MCF 10A (cell line): ENCODE measurements at regions of chr7 and their contacts with region 1.

Region 1: GRCh38 chr7:134432296-134433152 is 26.4 kb downstream of the AKR1B1 start:
- DNase-seq: peak; percentile 91
- H3K4me3 Mint-ChIP-seq: peak overlapping the region; percentile 67
- H3K27ac Mint-ChIP-seq: no peak overlapping the region
- H3K4me1 Mint-ChIP-seq: peaks cover 17% of the 10 kb centered on the region
- H3K27me3 Mint-ChIP-seq: no peaks in the 10 kb centered on the region
- CTCF ChIP-seq: peak; percentile 66

Region 2: GRCh38 chr7:134403677-134404076 is 28.8 kb before region 1 on chr7:
- CTCF ChIA-PET with region 1: no interaction called
- POLR2A ChIA-PET with region 1: no interaction called
- intact Hi-C with region 1: no loop called
- DNase-seq: no peak
- H3K4me3 Mint-ChIP-seq: no peak overlapping the region
- H3K27ac Mint-ChIP-seq: no peak overlapping the region
- H3K4me1 Mint-ChIP-seq: no peaks in the 10 kb centered on the region
- H3K27me3 Mint-ChIP-seq: no peaks in the 10 kb centered on the region
- CTCF ChIP-seq: no peak

Region 3: DNA sequence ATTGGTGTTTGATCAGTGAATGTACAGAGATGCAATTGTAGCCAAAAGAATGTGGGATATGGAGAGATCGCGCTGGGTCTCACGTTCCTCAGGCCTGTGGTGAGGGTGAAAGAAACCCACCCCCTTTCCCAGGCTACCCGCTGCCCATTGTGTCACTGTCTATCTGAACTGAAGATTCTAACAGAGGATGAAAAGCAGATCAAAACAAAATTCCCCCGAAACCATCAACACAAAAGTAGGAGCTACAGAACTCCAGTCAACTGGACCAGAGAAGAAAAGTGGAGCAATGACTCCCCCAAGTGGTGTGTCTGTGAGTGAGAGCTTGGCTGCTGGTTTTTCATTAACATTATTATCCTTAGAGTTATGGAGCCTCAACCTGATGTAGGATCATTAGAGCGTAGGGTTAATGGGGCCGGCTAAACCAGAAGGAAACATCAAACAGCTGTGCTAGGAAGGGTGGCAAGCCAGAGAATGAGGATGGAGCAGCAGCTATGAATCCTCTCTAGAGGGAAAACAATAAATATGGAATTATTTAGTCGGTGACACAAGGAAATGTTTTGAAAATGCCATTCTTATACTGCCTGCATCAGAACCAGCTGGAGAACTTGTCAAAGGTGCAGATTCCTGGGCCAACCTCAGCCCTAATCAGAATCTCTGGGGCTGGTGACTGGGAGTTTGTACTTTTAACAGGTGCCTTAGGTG is 11.9 kb before region 1 on chr7:
- CTCF ChIA-PET with region 1: interaction called, 22 read pairs
- POLR2A ChIA-PET with region 1: interaction called, 3 read pairs
- intact Hi-C with region 1: no loop called
- DNase-seq: peak; percentile 88
- H3K4me3 Mint-ChIP-seq: peak overlapping the region; percentile 26
- H3K27ac Mint-ChIP-seq: no peak overlapping the region
- H3K4me1 Mint-ChIP-seq: peaks cover 16% of the 10 kb centered on the region
- H3K27me3 Mint-ChIP-seq: no peaks in the 10 kb centered on the region
- CTCF ChIP-seq: peak; percentile 73

Region 4: GRCh38 chr7:134458806-134459698 is 26.5 kb after region 1 on chr7 and contains the start of gene AKR1B1:
- CTCF ChIA-PET with region 1: interaction called, 34 read pairs
- POLR2A ChIA-PET with region 1: interaction called, 7 read pairs
- intact Hi-C with region 1: no loop called
- DNase-seq: peak; percentile 86
- H3K4me3 Mint-ChIP-seq: peak within 1 kb of the TSS; percentile 76
- H3K27ac Mint-ChIP-seq: peak within 1 kb of the TSS; percentile 61
- H3K4me1 Mint-ChIP-seq: peaks cover 29% of the 10 kb centered on the region
- H3K27me3 Mint-ChIP-seq: no peaks in the 10 kb centered on the region
- CTCF ChIP-seq: peak; percentile 18
- total RNA-seq, gene AKR1B1: 115 and 128 TPM in 2 replicates

Region 5: GRCh38 chr7:134504660-134505164 is 72.2 kb after region 1 on chr7:
- CTCF ChIA-PET with region 1: interaction called, 256 read pairs
- POLR2A ChIA-PET with region 1: interaction called, 3 read pairs
- intact Hi-C with region 1: no loop called
- DNase-seq: peak; percentile 43
- H3K4me3 Mint-ChIP-seq: no peak overlapping the region
- H3K27ac Mint-ChIP-seq: peak overlapping the region; percentile 59
- H3K4me1 Mint-ChIP-seq: peaks cover 20% of the 10 kb centered on the region
- H3K27me3 Mint-ChIP-seq: no peaks in the 10 kb centered on the region
- CTCF ChIP-seq: no peak

Region 6: DNA sequence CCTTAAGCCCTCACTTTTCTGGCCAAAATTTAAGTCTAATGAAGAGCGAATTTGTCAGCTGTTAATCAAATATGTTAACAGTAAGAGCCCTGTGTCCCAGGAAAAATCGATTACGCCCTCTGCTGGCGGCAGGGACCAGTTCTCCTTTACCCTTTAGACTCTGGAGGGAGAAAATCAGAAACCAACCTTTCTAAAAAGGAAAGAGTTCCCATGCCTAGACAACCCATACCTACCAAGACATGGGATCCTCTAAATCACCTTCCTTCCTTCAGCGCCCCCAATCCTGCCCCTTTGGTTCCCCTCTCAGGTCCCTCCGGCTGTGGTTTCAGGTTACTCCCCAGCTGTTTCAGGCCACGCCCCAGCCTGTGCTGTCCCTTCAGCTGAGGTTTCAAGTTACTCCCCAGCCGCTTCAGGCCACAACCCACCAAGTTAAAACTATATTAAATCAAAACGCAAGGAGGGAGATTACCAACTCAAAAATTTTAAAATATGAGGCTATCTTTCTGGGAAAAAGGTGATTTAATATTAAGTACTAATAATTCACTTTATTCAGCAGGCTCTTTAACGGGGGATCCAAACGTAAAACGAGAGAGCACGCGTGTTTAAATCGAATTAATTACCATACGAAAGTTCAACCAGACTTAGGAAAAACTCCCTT is 115.0 kb after region 1 on chr7:
- CTCF ChIA-PET with region 1: interaction called, 26 read pairs
- POLR2A ChIA-PET with region 1: interaction called, 3 read pairs
- intact Hi-C with region 1: loop called (anchors 1 kb)
- DNase-seq: peak; percentile 83
- H3K4me3 Mint-ChIP-seq: peak overlapping the region; percentile 68
- H3K27ac Mint-ChIP-seq: peak overlapping the region; percentile 68
- H3K4me1 Mint-ChIP-seq: peaks cover 26% of the 10 kb centered on the region
- H3K27me3 Mint-ChIP-seq: no peaks in the 10 kb centered on the region
- CTCF ChIP-seq: peak; percentile 74

Region 7: DNA sequence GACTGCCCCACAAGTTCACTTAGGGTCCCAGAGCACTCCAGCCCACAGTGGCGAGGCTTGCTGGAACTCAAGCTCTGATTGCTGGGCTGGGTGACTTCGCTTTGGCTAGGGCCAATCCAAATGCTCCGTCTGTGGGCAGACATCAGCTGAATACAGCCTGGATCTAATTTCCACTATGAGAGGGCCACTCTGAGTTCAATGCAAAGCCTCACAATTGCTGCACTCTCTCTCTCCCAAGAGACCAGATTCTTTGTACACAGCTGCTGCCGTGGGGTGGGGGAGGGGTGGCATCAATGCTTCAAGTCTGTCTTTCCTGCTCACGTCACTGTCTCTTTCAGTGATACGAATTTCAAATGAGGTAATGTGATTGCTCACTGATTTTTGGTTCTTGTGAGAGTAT is 166.8 kb after region 1 on chr7:
- CTCF ChIA-PET with region 1: interaction called, 13 read pairs
- POLR2A ChIA-PET with region 1: interaction called, 3 read pairs
- intact Hi-C with region 1: no loop called
- DNase-seq: no peak
- H3K4me3 Mint-ChIP-seq: no peak overlapping the region
- H3K27ac Mint-ChIP-seq: no peak overlapping the region
- H3K4me1 Mint-ChIP-seq: no peaks in the 10 kb centered on the region
- H3K27me3 Mint-ChIP-seq: no peaks in the 10 kb centered on the region
- CTCF ChIP-seq: no peak

Region 8: DNA sequence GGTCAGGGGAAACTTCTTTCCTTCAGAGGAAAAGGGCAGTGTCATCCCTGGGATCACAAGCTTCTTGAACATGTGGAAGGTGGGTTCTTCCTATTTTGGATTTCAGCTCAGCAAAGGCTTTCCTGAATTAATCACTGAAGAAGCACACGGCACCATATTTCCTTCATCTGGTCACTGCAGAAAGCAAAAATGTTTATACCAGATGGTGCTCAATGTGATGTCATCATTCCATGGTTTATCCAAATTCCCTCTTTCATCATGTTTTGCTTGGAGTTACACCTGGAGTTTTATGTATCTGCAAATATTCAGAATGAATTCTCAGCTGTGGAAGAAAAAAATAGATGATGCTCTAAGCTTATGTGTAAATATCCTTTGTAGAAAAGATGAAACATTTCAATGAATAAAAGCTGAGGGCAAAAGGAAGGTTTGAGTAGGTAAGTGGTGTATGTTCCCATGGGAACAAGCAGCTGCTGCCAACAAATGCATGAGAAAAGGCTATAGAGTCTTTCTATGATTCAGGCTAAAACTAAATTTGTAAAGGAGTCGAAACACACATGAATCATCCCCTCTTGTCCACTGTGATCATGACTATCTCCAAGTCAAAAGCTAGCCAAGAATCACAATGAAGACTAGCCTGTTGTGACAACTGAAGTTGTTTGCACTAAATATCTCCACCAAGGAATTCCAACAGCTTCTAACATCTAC is 187.3 kb after region 1 on chr7:
- CTCF ChIA-PET with region 1: interaction called, 17 read pairs
- POLR2A ChIA-PET with region 1: no interaction called
- intact Hi-C with region 1: no loop called
- DNase-seq: peak; percentile 92
- H3K4me3 Mint-ChIP-seq: no peak overlapping the region
- H3K27ac Mint-ChIP-seq: peak overlapping the region; percentile 94
- H3K4me1 Mint-ChIP-seq: peaks cover 58% of the 10 kb centered on the region
- H3K27me3 Mint-ChIP-seq: no peaks in the 10 kb centered on the region
- CTCF ChIP-seq: no peak